Sigmoid colon (tissue), 7 donors: ENCODE measurements at regions of chr4 and their contacts with region 1.

Region 1: DNA sequence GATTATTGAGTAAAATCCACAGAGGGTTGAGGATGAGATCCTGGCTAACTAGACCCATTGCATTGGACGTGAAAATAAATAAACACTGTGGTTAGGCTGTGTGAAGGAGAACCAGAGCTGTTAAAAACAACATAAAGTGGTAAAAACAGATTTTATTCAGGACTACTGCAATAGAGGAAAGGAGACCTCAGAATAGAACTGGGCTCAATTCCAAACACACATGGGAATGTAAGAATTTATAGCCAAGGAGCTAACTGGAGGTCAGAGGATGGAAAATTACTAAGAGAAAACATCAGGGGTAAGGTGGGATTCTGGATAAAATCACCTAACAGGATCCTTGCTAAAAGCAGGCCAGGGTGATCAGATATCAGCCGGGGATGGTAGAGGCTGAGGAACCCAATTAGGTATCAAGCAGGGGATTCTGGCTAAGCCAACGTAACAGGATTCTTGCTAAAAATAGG is 112.4 kb downstream of the RNF150 start:
- DNase-seq: no peak
- H3K4me3 ChIP-seq: no peak overlapping the region
- H3K27ac ChIP-seq: peak overlapping the region; percentile 50 to 83 (median 74)
- H3K4me1 ChIP-seq: peaks cover 0 to 79% (median 67%) of the 10 kb centered on the region in 4 donors
- H3K27me3 ChIP-seq: no peaks in the 10 kb centered on the region
- CTCF ChIP-seq: no peak
- EP300 ChIP-seq: no peak
- POLR2A ChIP-seq: no peak

Region 2: GRCh38 chr4:140943486-140944198 is 77.2 kb before region 1 on chr4:
- intact Hi-C with region 1: loop called (anchors 5 kb)
- DNase-seq: no peak
- H3K4me3 ChIP-seq: no peak overlapping the region
- H3K27ac ChIP-seq: peak overlapping the region; percentile 51 to 80 (median 71)
- H3K4me1 ChIP-seq: peaks cover 0 to 77% (median 66%) of the 10 kb centered on the region in 4 donors
- H3K27me3 ChIP-seq: no peaks in the 10 kb centered on the region
- CTCF ChIP-seq: no peak
- EP300 ChIP-seq: no peak
- POLR2A ChIP-seq: no peak

Region 3: GRCh38 chr4:141058739-141059512 is 38.1 kb after region 1 on chr4:
- intact Hi-C with region 1: loop called (anchors 5 kb)
- DNase-seq: no peak
- H3K4me3 ChIP-seq: no peak overlapping the region
- H3K27ac ChIP-seq: peak overlapping the region in 2 of 4 donors; percentile 22 to 43
- H3K4me1 ChIP-seq: peaks cover 0 to 42% (median 7%) of the 10 kb centered on the region in 4 donors
- H3K27me3 ChIP-seq: no peaks in the 10 kb centered on the region
- CTCF ChIP-seq: no peak
- EP300 ChIP-seq: no peak
- POLR2A ChIP-seq: no peak